HCT116 (cell line): ENCODE measurements at regions of chr19 and their contacts with region 1.

Region 1: GRCh38 chr19:29610563-29611271 is 4.6 kb downstream of the POP4 start:
- DNase-seq: peak; percentile 43
- ATAC-seq: peak; percentile 77
- H3K4me3 ChIP-seq: no peak overlapping the region
- H3K27ac ChIP-seq: no peak overlapping the region
- H3K4me1 ChIP-seq: peaks cover 4 to 7% of the 10 kb centered on the region in 2 experiments; a peak in 3 of 4 replicates
- H3K27me3 ChIP-seq: no peaks in the 10 kb centered on the region
- CTCF ChIP-seq: peak; percentile 80 to 89 (median 88)
- POLR2A ChIP-seq: no peak
- RAD21 ChIP-seq: peak; percentile 80

Region 2: GRCh38 chr19:29212648-29213573 is 397.8 kb before region 1 on chr19 and contains the start of gene UQCRFS1:
- CTCF ChIA-PET with region 1: no interaction called
- POLR2A ChIA-PET with region 1: no interaction called
- RAD21 ChIA-PET with region 1: no interaction called
- intact Hi-C with region 1: loop called (anchors 2 kb)
- DNase-seq: peak; percentile 86
- ATAC-seq: peak; percentile 99
- H3K4me3 ChIP-seq: peak within 1 kb of the TSS; percentile 89 to 94
- H3K27ac ChIP-seq: peak within 1 kb of the TSS; percentile 83
- H3K4me1 ChIP-seq: peaks cover 3 to 16% of the 10 kb centered on the region in 2 experiments; a peak in 3 of 4 replicates
- H3K27me3 ChIP-seq: peaks cover 4% of the 10 kb centered on the region; the same call in 1 of the 2 replicates
- CTCF ChIP-seq: no peak
- POLR2A ChIP-seq: no peak
- RAD21 ChIP-seq: no peak
- total RNA-seq, gene UQCRFS1: 45.8 TPM

Region 3: GRCh38 chr19:29467824-29468401 is 142.8 kb before region 1 on chr19:
- CTCF ChIA-PET with region 1: no interaction called
- POLR2A ChIA-PET with region 1: no interaction called
- RAD21 ChIA-PET with region 1: no interaction called
- intact Hi-C with region 1: no loop called
- DNase-seq: peak; percentile 41
- ATAC-seq: peak; percentile 80
- H3K4me3 ChIP-seq: no peak overlapping the region
- H3K27ac ChIP-seq: no peak overlapping the region
- H3K4me1 ChIP-seq: no peaks in the 10 kb centered on the region
- H3K27me3 ChIP-seq: no peaks in the 10 kb centered on the region
- CTCF ChIP-seq: peak; percentile 29 to 63 (median 56); a peak in 5 of 6 replicates
- POLR2A ChIP-seq: no peak
- RAD21 ChIP-seq: peak; percentile 48

Region 4: DNA sequence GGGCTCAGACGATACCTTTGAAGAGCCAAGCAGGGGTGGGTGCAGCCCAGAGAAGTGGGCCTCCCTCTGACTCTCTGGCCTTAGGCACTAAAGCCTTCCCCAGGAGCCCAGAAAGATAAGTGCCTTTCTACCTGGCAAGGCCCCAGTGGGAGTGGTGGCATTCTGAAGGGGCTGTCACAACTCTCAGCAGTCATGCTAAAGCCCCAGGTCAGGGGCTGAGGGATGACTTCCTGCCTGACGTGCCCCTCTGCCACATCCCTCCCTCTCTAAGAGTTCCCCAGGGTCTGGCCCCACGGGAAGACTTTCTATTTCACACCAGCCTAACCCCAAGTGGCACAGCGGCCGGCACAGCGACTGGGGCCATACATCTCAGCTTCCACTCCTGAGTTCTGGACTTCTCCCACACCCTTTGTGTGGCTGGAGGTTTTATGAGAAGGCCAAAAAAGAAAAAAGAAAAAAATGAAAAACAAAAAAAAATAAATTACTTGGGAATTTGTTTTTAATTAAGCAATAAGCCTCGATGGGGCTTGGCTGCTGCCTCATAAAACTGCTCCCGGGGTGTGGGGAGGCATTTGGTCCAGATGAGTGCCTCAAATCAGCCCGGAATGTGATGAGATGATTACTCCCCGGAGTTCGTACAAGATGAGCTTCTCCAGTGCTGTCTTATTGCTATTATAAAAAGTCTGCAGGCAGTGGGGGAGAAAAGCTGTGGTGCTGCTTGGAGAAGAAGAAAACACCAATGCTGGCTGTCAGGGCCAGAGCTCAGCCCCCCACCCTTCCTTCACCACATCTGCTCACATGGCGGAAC is 26.0 kb after region 1 on chr19:
- CTCF ChIA-PET with region 1: no interaction called
- POLR2A ChIA-PET with region 1: no interaction called
- RAD21 ChIA-PET with region 1: no interaction called
- intact Hi-C with region 1: no loop called
- DNase-seq: no peak
- ATAC-seq: no peak
- H3K4me3 ChIP-seq: no peak overlapping the region
- H3K27ac ChIP-seq: no peak overlapping the region
- H3K4me1 ChIP-seq: no peaks in the 10 kb centered on the region
- H3K27me3 ChIP-seq: no peaks in the 10 kb centered on the region
- CTCF ChIP-seq: no peak
- POLR2A ChIP-seq: no peak
- RAD21 ChIP-seq: no peak

Region 5: GRCh38 chr19:29665215-29665825 is 54.6 kb after region 1 on chr19 and contains the start of gene PLEKHF1:
- CTCF ChIA-PET with region 1: interaction called, 10 read pairs
- POLR2A ChIA-PET with region 1: interaction called, 3 read pairs
- RAD21 ChIA-PET with region 1: interaction called in 1 of 2 experiments, 4 read pairs
- intact Hi-C with region 1: loop called (anchors 5 kb)
- DNase-seq: peak; percentile 48
- ATAC-seq: peak; percentile 94
- H3K4me3 ChIP-seq: peak within 1 kb of the TSS; percentile 75 to 94
- H3K27ac ChIP-seq: peak within 1 kb of the TSS; percentile 57; the same call in 1 of the 2 replicates
- H3K4me1 ChIP-seq: peaks cover 35 to 53% of the 10 kb centered on the region in 2 experiments
- H3K27me3 ChIP-seq: no peaks in the 10 kb centered on the region
- CTCF ChIP-seq: no peak
- POLR2A ChIP-seq: no peak
- RAD21 ChIP-seq: no peak
- total RNA-seq, gene PLEKHF1: 5.5 TPM

Region 6: DNA sequence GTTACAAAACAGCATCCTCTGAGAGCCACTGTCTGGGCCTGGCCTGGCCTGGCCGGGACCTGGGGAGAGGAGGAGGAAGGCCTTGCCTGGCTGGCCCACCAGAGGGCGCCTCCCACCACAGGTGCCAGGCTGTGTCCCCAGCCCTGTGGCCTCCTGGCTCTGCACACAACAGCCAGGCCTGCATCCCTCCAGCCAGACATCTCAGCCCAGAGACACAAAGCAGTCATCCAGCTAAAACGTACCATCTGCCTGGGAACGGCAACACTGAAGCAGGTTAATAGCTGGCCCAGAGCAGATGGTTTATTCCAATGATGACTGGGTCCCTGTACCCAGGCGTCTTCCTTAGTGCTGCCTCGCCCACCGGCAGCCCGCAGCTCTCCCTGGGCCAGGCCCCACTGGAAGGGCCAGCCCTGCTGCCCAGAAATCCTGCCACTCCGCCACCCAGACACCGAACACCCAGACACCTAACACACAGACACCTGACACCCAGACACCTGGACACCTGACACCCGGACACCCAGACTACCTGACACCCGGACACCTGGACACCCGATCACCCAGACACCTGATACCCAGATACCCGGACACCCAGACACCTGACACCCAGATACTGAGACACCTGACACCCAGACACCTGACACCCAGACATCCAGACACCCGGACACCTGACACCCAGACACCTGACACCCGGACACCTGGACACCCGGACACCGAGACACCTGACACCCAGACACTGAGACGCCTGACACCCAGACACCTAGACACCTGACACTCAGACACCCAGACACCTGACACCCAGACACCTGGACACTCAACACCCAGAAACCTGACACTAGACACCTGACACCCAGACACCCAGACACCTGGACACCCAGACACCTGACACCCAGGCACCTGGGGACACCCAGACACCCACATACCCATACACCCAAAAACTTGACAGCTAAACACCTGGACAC is 84.2 kb after region 1 on chr19:
- CTCF ChIA-PET with region 1: interaction called, 3 read pairs
- POLR2A ChIA-PET with region 1: no interaction called
- RAD21 ChIA-PET with region 1: no interaction called
- intact Hi-C with region 1: loop called (anchors 1 kb)
- DNase-seq: no peak
- ATAC-seq: peak; percentile 99
- H3K4me3 ChIP-seq: no peak overlapping the region
- H3K27ac ChIP-seq: peak overlapping the region; percentile 35; the same call in 1 of the 2 replicates
- H3K4me1 ChIP-seq: peaks cover 0 to 6% of the 10 kb centered on the region in 2 experiments; a peak in 1 of 4 replicates
- H3K27me3 ChIP-seq: no peaks in the 10 kb centered on the region
- CTCF ChIP-seq: peak; percentile 56 to 95 (median 83); a peak in 5 of 6 replicates
- POLR2A ChIP-seq: no peak
- RAD21 ChIP-seq: peak; percentile 73

Region 7: GRCh38 chr19:29714953-29715700 is 104.4 kb after region 1 on chr19 and contains the start of gene C19orf12:
- CTCF ChIA-PET with region 1: interaction called, 44 read pairs
- POLR2A ChIA-PET with region 1: interaction called, 5 read pairs
- RAD21 ChIA-PET with region 1: interaction called, 6 to 7 read pairs
- intact Hi-C with region 1: loop called (anchors 1 kb)
- DNase-seq: no peak
- ATAC-seq: peak; percentile 81
- H3K4me3 ChIP-seq: peak within 1 kb of the TSS; percentile 80 to 96
- H3K27ac ChIP-seq: peak within 1 kb of the TSS; percentile 92
- H3K4me1 ChIP-seq: peaks cover 10% of the 10 kb centered on the region in 2 experiments
- H3K27me3 ChIP-seq: no peaks in the 10 kb centered on the region
- CTCF ChIP-seq: no peak
- POLR2A ChIP-seq: peak; percentile 45
- RAD21 ChIP-seq: no peak
- total RNA-seq, gene C19orf12: 10.0 TPM

Region 8: GRCh38 chr19:29873024-29873800 is 262.5 kb after region 1 on chr19:
- CTCF ChIA-PET with region 1: no interaction called
- POLR2A ChIA-PET with region 1: no interaction called
- RAD21 ChIA-PET with region 1: no interaction called
- intact Hi-C with region 1: loop called (anchors 5 kb)
- DNase-seq: no peak
- ATAC-seq: peak; percentile 89
- H3K4me3 ChIP-seq: peak overlapping the region; percentile 26 to 50
- H3K27ac ChIP-seq: peak overlapping the region; percentile 33; the same call in 1 of the 2 replicates
- H3K4me1 ChIP-seq: peaks cover 0 to 16% of the 10 kb centered on the region in 2 experiments; a peak in 3 of 4 replicates
- H3K27me3 ChIP-seq: no peaks in the 10 kb centered on the region
- CTCF ChIP-seq: peak; percentile 57 to 73 (median 71); a peak in 5 of 6 replicates
- POLR2A ChIP-seq: no peak
- RAD21 ChIP-seq: peak; percentile 74